Keratinocyte (primary cell): ENCODE measurements at regions of chr18 and their contacts with region 1.

Region 1: DNA sequence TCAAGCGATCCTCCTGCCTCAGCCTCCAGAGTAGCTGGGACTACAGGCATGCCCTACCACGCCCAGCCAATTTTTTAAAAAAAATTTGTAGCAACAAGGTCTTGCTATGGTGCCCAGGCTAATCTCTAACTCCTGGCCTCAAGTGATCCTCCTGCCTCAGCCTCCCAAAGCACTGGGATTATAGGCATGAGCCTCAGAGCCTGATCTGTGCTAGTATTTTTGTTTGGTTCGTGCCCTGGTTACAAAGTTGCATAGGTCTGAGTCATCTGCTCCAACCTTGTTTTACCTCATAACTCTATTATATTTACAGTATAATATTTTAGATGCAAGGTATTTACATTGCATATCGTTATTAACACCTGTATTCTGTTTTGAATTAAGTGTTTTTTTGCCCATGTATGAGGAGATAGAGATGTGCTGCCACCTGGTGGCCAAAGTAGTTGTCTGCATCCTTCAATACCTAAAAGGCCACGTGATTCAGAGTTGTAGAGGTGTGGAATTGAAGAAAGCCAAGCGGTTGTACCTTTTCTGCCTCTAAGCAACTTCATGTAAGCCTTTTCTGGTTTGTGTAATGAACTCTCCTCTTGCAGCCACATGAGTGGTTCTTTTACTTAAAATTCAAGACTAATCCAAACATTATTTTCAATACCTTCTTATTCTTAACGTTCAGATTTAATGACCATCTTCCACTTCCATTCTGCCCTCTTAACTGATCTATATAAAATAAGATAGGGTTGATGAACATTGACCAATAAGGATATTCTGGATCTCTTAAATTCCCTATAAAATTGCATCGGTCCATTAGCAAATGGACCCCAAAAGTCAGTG is 19.9 kb upstream of the CABYR start:
- DNase-seq: peak; percentile 30
- H3K4me3 ChIP-seq: no peak overlapping the region
- H3K27ac ChIP-seq: no peak overlapping the region
- H3K4me1 ChIP-seq: no peaks in the 10 kb centered on the region
- H3K27me3 ChIP-seq: no peaks in the 10 kb centered on the region
- CTCF ChIP-seq: peak; percentile 68 to 69 (median 69)

Region 2: DNA sequence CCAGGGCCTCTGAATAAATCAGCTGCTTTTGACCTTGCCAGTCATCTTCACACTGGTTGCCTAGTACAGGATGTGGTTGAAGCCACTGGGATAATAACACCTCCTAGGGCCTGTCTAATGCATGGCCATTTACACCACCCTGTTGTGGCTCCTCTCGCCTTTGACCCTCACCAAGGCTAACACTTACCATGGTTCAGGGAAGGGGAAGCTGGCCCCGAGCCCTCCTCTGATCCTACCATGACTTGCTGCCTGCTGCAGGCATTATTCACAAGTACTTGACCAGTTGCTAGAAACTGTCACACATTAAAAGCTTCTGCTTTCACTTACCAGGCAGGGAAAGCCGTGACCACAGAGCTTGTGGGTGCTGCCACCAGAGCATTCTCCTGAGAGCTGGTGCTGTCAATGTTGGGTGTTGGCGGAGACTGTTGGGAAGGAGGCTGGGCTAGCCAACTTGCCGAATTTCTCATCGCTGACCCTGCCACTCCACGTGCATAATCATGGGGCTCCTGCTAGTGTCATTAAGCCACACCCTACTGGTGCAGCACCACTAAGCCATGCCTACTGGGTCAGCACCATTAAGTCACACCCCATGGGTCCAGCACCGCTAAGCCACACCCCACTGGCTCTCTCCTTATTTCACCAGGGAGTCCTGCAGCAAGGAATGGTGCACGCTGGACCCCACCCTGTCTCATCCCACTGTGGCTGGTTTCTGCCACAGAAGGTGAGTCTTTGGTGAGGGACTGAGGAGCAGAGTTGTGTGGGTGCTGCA is 151.5 kb before region 1 on chr18:
- dilution Hi-C with region 1: loop called (anchors 10 kb)
- DNase-seq: no peak
- H3K4me3 ChIP-seq: no peak overlapping the region
- H3K27ac ChIP-seq: no peak overlapping the region
- H3K4me1 ChIP-seq: peaks cover 16% of the 10 kb centered on the region
- H3K27me3 ChIP-seq: no peaks in the 10 kb centered on the region
- CTCF ChIP-seq: no peak

Region 3: GRCh38 chr18:24086082-24086481 is 32.9 kb before region 1 on chr18:
- dilution Hi-C with region 1: no loop called
- DNase-seq: no peak
- H3K4me3 ChIP-seq: no peak overlapping the region
- H3K27ac ChIP-seq: no peak overlapping the region
- H3K4me1 ChIP-seq: no peaks in the 10 kb centered on the region
- H3K27me3 ChIP-seq: no peaks in the 10 kb centered on the region
- CTCF ChIP-seq: no peak